CD8-positive, alpha-beta memory T cell (primary cell): ENCODE measurements at regions of chr6 and their contacts with region 1.

Region 1: GRCh38 chr6:157335829-157336228 is 12.5 kb upstream of the TMEM242 start:
- DNase-seq: no peak
- H3K4me3 ChIP-seq: no peak overlapping the region
- H3K4me3 Mint-ChIP-seq: no peak overlapping the region
- H3K27ac ChIP-seq: no peak overlapping the region
- H3K27ac Mint-ChIP-seq: no peak overlapping the region
- H3K4me1 ChIP-seq: no peaks in the 10 kb centered on the region
- H3K4me1 Mint-ChIP-seq: no peaks in the 10 kb centered on the region
- H3K27me3 ChIP-seq: no peaks in the 10 kb centered on the region
- H3K27me3 Mint-ChIP-seq: peaks cover 24 to 71% of the 10 kb centered on the region in 2 donors

Region 2: GRCh38 chr6:156686995-156687788 is 648.6 kb before region 1 on chr6:
- CTCF ChIA-PET with region 1: no interaction called
- POLR2A ChIA-PET with region 1: interaction called, 12 read pairs
- DNase-seq: peak; percentile 65 to 86 (median 80)
- H3K4me3 ChIP-seq: peak overlapping the region; percentile 84
- H3K4me3 Mint-ChIP-seq: peak overlapping the region; percentile 84 to 93 (median 89)
- H3K27ac ChIP-seq: peak overlapping the region; percentile 90
- H3K27ac Mint-ChIP-seq: peak overlapping the region; percentile 77 to 99 (median 95)
- H3K4me1 ChIP-seq: peaks cover 7% of the 10 kb centered on the region
- H3K4me1 Mint-ChIP-seq: peaks cover 14 to 23% (median 21%) of the 10 kb centered on the region in 3 donors
- H3K27me3 ChIP-seq: no peaks in the 10 kb centered on the region
- H3K27me3 Mint-ChIP-seq: peaks cover 6 to 9% of the 10 kb centered on the region in 2 donors

Region 3: DNA sequence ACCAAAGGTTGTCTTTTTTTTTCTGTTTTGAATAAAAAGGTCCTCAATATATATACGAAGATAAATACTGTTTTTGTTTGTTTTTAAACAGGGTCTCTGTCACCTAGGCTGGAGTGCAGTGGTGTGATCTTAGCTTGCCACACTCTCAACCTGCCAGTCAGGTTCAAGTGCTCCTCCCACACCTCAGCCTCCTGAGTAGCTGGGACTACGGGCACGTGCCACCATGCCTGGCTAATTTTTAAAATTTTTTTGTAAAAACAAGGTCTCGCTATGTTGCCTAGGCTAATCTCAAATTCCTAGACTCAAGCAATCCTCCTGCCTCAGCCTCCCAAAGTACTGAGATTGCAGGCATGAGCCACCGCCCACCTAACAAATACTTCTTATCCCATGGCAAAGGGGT is 26.5 kb before region 1 on chr6:
- CTCF ChIA-PET with region 1: no interaction called
- POLR2A ChIA-PET with region 1: no interaction called
- DNase-seq: no peak
- H3K4me3 ChIP-seq: no peak overlapping the region
- H3K4me3 Mint-ChIP-seq: no peak overlapping the region
- H3K27ac ChIP-seq: no peak overlapping the region
- H3K27ac Mint-ChIP-seq: no peak overlapping the region
- H3K4me1 ChIP-seq: no peaks in the 10 kb centered on the region
- H3K4me1 Mint-ChIP-seq: peaks cover 0 to 3% (median 0%) of the 10 kb centered on the region in 3 donors
- H3K27me3 ChIP-seq: no peaks in the 10 kb centered on the region
- H3K27me3 Mint-ChIP-seq: no peaks in the 10 kb centered on the region

Region 4: DNA sequence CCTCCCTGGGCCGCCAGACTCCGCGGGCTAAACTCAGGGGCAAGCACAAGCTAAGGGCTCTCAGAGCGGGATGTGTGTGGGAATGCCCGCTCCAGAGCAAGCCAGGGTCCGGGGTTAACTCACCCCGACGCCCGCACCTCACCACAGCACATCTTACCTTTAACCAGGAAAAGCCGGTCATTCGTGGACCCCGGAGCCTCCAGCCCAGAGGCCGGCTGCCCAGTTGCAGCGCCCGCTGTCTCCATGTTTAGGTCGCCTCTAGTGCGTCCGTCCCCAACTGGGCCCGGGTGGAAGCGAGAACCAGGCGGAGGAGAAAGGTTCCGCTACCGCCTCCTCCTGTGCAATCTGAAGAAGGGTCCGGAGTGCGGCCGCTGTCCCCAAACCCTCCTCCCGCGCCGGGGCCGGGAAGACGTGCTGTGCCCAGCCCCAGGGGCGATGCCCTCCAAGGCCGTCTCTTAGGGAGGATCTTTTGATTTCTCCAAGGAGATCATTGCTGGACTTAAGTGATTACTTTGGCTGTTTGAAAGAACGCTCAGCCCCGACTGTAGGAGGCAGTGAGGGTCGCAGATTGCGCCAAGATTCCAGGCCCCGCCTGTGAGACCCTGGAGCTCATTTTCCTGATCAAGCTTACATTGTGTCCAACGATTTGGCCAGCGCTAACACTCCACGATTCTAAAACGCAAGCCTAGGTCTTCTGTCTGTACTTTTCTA is 12.4 kb before region 1 on chr6 and contains the start of gene TMEM242:
- CTCF ChIA-PET with region 1: interaction called, 13 read pairs
- POLR2A ChIA-PET with region 1: no interaction called
- DNase-seq: peak; percentile 71 to 86 (median 80)
- H3K4me3 ChIP-seq: peak within 1 kb of the TSS; percentile 90
- H3K4me3 Mint-ChIP-seq: peak within 1 kb of the TSS; percentile 94 to 97 (median 96)
- H3K27ac ChIP-seq: peak within 1 kb of the TSS; percentile 73
- H3K27ac Mint-ChIP-seq: peak within 1 kb of the TSS; percentile 82 to 98 (median 89)
- H3K4me1 ChIP-seq: peaks cover 7% of the 10 kb centered on the region
- H3K4me1 Mint-ChIP-seq: peaks cover 15 to 24% (median 21%) of the 10 kb centered on the region in 3 donors
- H3K27me3 ChIP-seq: no peaks in the 10 kb centered on the region
- H3K27me3 Mint-ChIP-seq: peaks cover 0 to 30% of the 10 kb centered on the region in 2 donors
- total RNA-seq, gene TMEM242: 11.0 to 11.9 TPM

Region 5: GRCh38 chr6:157361886-157362285 is 26.1 kb after region 1 on chr6:
- CTCF ChIA-PET with region 1: no interaction called
- POLR2A ChIA-PET with region 1: no interaction called
- DNase-seq: no peak
- H3K4me3 ChIP-seq: no peak overlapping the region
- H3K4me3 Mint-ChIP-seq: no peak overlapping the region
- H3K27ac ChIP-seq: no peak overlapping the region
- H3K27ac Mint-ChIP-seq: no peak overlapping the region
- H3K4me1 ChIP-seq: no peaks in the 10 kb centered on the region
- H3K4me1 Mint-ChIP-seq: no peaks in the 10 kb centered on the region
- H3K27me3 ChIP-seq: no peaks in the 10 kb centered on the region
- H3K27me3 Mint-ChIP-seq: peaks cover 31 to 48% of the 10 kb centered on the region in 2 donors

Region 6: GRCh38 chr6:157614026-157614568 is 278.3 kb after region 1 on chr6:
- CTCF ChIA-PET with region 1: no interaction called
- POLR2A ChIA-PET with region 1: no interaction called
- DNase-seq: peak in 1 of 5 donors; percentile 32
- H3K4me3 ChIP-seq: no peak overlapping the region
- H3K4me3 Mint-ChIP-seq: no peak overlapping the region
- H3K27ac ChIP-seq: no peak overlapping the region
- H3K27ac Mint-ChIP-seq: no peak overlapping the region
- H3K4me1 ChIP-seq: no peaks in the 10 kb centered on the region
- H3K4me1 Mint-ChIP-seq: no peaks in the 10 kb centered on the region
- H3K27me3 ChIP-seq: no peaks in the 10 kb centered on the region
- H3K27me3 Mint-ChIP-seq: peaks cover 0 to 1% of the 10 kb centered on the region in 2 donors